ENCODE measurements at regions of chr12 and their contacts with region 1.

Region 1: DNA sequence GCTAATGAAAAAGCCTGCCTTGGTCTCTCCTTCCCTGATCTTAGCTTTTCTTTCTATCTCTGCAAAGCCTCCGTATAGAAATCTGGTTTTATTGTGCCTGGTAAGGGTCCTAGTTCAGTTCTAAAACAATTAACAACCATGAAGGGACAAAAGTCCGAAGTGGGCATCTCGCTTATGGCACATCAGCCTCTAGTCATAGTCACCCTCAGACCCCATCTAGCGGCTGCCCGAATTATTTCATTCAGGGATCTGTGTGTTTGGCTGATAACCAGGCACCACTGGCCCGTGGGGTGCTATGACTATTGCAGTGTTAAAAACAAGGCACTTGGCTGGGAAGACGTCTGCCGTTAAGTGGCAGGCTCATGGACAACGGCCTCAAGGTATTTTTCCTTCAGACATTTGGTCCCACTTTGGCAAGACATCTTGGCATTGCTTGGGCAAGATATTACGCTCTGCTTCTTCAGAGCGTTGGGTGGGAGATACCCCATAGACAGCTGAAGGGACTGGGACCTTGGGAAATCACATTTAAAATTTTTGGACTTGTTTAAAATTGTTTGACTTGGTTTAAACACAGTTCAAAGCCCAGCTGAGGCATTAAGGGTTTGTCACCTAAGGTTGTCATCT is 87.1 kb downstream of the SINHCAF start:
- DNase-seq: peak; percentile 81
- H3K4me3 Mint-ChIP-seq: peak overlapping the region; percentile 23
- H3K27ac Mint-ChIP-seq: no peak overlapping the region
- H3K4me1 Mint-ChIP-seq: peaks cover 28% of the 10 kb centered on the region
- H3K27me3 Mint-ChIP-seq: peaks cover 29% of the 10 kb centered on the region
- CTCF ChIP-seq: peak; percentile 76

Region 2: GRCh38 chr12:31117203-31118011 is 121.5 kb before region 1 on chr12:
- CTCF ChIA-PET with region 1: interaction called, 3 read pairs
- intact Hi-C with region 1: loop called (anchors 2 kb)
- DNase-seq: peak; percentile 83
- H3K4me3 Mint-ChIP-seq: peak overlapping the region; percentile 76
- H3K27ac Mint-ChIP-seq: no peak overlapping the region
- H3K4me1 Mint-ChIP-seq: no peaks in the 10 kb centered on the region
- H3K27me3 Mint-ChIP-seq: no peaks in the 10 kb centered on the region
- CTCF ChIP-seq: peak; percentile 80

Region 3: GRCh38 chr12:31280183-31280582 is 41.3 kb after region 1 on chr12:
- CTCF ChIA-PET with region 1: no interaction called
- intact Hi-C with region 1: no loop called
- DNase-seq: no peak
- H3K4me3 Mint-ChIP-seq: no peak overlapping the region
- H3K27ac Mint-ChIP-seq: no peak overlapping the region
- H3K4me1 Mint-ChIP-seq: no peaks in the 10 kb centered on the region
- H3K27me3 Mint-ChIP-seq: no peaks in the 10 kb centered on the region
- CTCF ChIP-seq: no peak